Endothelial cell of umbilical vein (primary cell): ENCODE measurements at regions of chr7 and their contacts with region 1.

Region 1: DNA sequence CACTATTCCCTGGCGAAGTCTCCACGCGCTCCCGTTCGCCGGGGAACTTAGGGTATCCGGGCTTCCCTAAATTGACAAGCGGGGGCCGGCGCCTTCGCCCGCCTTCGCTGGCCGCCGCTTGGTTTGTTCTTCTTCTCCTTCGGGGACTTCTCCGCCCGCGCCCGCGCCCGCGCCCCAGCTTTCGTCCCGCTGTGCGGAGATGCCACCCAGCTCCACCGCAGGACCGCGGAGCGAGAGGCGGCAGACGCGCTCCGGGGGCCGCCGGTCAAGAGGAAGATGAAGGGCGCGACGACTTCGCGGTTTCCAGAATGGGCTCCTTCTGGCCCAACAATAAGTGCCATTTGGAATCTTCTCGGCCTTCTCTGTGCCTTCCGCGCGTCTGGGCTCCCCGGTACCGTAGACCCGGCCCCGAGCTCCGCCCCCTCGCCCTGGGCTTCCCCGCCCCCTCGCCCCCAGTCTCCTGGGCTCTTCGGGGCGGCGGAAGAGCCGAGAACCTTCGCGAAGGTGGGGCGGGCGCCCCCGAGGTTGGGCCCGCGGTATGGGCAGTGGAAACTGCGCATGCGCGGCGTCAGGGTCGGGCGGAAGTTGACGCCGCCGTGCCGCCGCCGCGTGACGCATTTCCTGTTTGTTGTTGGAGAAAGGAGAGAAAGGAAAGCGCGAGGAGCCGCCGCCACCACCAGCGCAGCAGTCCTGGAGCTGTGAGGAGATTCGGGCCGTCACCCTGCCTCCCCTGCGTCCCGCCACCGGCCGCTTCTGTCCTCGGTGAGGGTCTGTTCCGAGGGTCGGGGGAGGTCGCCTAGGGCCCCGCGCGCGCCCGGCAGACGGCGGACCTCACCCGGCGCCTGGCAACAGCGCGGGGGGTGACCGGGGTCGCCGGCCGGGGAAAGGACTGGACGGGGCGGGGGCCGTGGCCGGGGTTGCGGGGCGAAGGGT is at the start of gene DNAJB6:
- DNase-seq: peak; percentile 95
- H3K4me3 ChIP-seq: peak within 1 kb of the TSS; percentile 85 to 96 (median 92)
- H3K27ac ChIP-seq: peak within 1 kb of the TSS; percentile 81
- H3K4me1 ChIP-seq: peaks cover 19% of the 10 kb centered on the region
- H3K27me3 ChIP-seq: peaks cover 2 to 4% of the 10 kb centered on the region in 2 experiments
- CTCF ChIP-seq: no peak
- POLR2A ChIP-seq: peak; percentile 67
- total RNA-seq, gene DNAJB6: 135 and 138 TPM in 2 replicates

Region 2: DNA sequence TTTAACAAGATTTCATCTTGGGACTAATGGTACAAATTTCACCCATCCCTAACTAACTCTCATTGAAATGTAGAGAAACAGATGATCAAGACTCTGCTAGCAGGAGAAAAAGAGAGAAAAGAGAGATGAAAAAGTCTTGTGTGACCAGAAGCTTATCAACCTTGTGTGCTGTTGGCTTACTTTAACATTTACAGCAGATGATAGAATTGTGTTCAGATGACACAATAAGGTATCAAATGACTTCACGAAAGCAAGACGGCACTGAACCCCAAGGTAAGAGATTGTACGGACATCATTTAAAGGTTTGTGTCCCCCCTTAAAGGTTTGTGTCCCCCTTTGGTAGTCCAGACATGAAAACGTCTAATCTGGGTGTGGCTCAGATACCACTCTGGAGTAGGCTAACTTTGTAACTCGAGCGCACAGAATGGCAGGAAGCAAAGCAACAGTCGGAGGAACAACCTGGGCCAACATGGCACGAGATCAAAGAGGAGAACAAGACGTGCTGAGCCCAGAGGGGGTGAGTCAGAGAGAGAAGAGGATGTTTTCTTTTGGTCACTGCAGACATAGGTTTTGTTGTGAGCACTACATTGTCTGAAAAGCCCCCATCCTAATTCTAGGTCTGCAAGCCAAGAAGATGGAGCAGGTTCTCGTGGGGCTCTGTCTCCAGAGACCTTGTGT is 433.3 kb before region 1 on chr7:
- CTCF ChIA-PET with region 1: no interaction called
- POLR2A ChIA-PET with region 1: no interaction called
- dilution Hi-C with region 1: no loop called
- intact Hi-C with region 1: loop called (anchors 5 kb)
- DNase-seq: peak; percentile 81
- H3K4me3 ChIP-seq: no peak overlapping the region
- H3K27ac ChIP-seq: peak overlapping the region; percentile 80
- H3K4me1 ChIP-seq: peaks cover 14% of the 10 kb centered on the region
- H3K27me3 ChIP-seq: no peaks in the 10 kb centered on the region
- CTCF ChIP-seq: no peak
- POLR2A ChIP-seq: peak; percentile 34

Region 3: DNA sequence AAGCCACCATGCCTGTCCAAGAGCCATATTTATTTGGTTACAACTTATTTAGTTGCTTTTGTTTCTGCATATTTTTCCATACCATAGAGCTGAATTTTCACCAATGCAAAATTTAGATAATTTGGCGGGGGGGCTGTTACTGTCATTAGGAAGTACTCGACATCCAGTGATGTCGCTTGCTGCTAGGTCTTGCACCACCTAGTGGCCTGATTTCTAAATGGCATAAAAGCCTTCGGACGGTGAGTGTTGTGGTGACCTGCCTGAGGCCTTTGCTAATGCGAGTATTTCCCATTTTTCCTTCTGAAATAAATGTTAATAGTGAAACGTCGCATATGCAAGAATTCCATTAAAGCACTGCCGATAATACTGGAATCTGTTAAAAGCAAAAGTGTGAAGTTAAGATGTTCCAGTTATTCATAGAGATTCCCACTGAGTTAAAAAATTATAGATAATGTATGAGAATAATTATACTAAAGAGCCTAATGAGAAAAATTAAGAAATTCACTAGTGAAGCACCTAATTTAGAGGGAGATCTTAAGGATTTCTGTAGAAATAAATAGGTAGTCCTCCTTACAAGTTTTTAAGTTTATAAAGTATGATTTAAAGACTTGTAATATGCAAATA is 85.9 kb before region 1 on chr7:
- CTCF ChIA-PET with region 1: interaction called, 4 read pairs
- POLR2A ChIA-PET with region 1: no interaction called
- dilution Hi-C with region 1: no loop called
- intact Hi-C with region 1: loop called (anchors 5 kb)
- DNase-seq: peak; percentile 64
- H3K4me3 ChIP-seq: no peak overlapping the region
- H3K27ac ChIP-seq: no peak overlapping the region
- H3K4me1 ChIP-seq: peaks cover 13% of the 10 kb centered on the region
- H3K27me3 ChIP-seq: no peaks in the 10 kb centered on the region
- CTCF ChIP-seq: peak; percentile 67 to 76
- POLR2A ChIP-seq: no peak

Region 4: GRCh38 chr7:157273208-157274093 is 63.2 kb before region 1 on chr7:
- CTCF ChIA-PET with region 1: interaction called, 30 read pairs
- POLR2A ChIA-PET with region 1: no interaction called
- dilution Hi-C with region 1: no loop called
- intact Hi-C with region 1: loop called (anchors 1 kb)
- DNase-seq: peak; percentile 76
- H3K4me3 ChIP-seq: no peak overlapping the region
- H3K27ac ChIP-seq: no peak overlapping the region
- H3K4me1 ChIP-seq: peaks cover 14% of the 10 kb centered on the region
- H3K27me3 ChIP-seq: no peaks in the 10 kb centered on the region
- CTCF ChIP-seq: peak; percentile 95 to 99
- POLR2A ChIP-seq: no peak

Region 5: GRCh38 chr7:157278791-157279724 is 57.6 kb before region 1 on chr7:
- CTCF ChIA-PET with region 1: interaction called, 30 read pairs
- POLR2A ChIA-PET with region 1: interaction called, 9 read pairs
- dilution Hi-C with region 1: no loop called
- intact Hi-C with region 1: loop called (anchors 2 kb)
- DNase-seq: no peak
- H3K4me3 ChIP-seq: peak overlapping the region; percentile 18 to 43 (median 27)
- H3K27ac ChIP-seq: no peak overlapping the region
- H3K4me1 ChIP-seq: peaks cover 18% of the 10 kb centered on the region
- H3K27me3 ChIP-seq: no peaks in the 10 kb centered on the region
- CTCF ChIP-seq: no peak
- POLR2A ChIP-seq: no peak

Region 6: GRCh38 chr7:157309990-157310668 is 26.5 kb before region 1 on chr7:
- CTCF ChIA-PET with region 1: no interaction called
- POLR2A ChIA-PET with region 1: no interaction called
- dilution Hi-C with region 1: no loop called
- intact Hi-C with region 1: loop called (anchors 2 kb)
- DNase-seq: peak; percentile 28
- H3K4me3 ChIP-seq: no peak overlapping the region
- H3K27ac ChIP-seq: peak overlapping the region; percentile 52
- H3K4me1 ChIP-seq: peaks cover 13% of the 10 kb centered on the region
- H3K27me3 ChIP-seq: no peaks in the 10 kb centered on the region
- CTCF ChIP-seq: no peak
- POLR2A ChIP-seq: no peak

Region 7: DNA sequence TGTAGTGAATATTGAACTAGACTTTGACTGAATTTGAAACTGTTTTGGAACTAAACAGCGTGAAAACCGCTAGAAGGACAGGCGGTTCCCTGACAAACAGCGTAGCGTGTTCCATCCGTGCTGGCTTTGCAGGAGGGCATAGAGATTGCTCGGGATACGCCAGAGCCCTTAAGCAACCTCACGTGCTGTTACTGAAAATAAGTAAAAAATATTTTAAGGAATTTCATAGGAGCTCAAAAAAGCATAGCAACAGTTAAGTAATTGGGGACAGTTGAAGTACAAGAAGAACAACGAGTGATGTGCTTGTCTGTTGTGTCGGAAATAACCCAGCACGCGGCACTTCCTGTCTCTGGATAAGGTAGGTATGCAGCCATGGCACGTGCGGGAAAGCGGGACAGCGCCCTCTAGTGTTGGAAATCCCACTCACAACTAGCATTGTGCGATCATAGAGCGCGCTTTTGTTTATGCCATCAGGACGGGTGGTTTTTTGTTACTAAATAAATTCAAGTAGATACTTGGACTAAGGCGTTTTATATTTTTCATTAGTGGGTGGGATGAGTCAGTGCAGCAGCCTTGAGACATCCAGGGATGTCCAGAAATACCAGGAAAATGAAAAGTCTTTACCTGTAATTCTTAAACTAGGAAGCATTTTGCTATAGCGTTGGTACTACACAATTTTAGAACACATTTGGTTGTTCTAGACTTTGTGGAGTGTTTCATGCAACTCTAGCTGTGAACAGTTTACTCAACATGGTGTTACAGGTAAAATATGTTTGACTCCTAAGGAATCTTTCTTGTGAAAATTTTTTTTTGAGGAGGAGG is 50.5 kb after region 1 on chr7:
- CTCF ChIA-PET with region 1: interaction called, 15 read pairs
- POLR2A ChIA-PET with region 1: no interaction called
- dilution Hi-C with region 1: no loop called
- intact Hi-C with region 1: no loop called
- DNase-seq: peak; percentile 84
- H3K4me3 ChIP-seq: no peak overlapping the region
- H3K27ac ChIP-seq: no peak overlapping the region
- H3K4me1 ChIP-seq: peaks cover 6% of the 10 kb centered on the region
- H3K27me3 ChIP-seq: no peaks in the 10 kb centered on the region
- CTCF ChIP-seq: peak; percentile 85 to 91
- POLR2A ChIP-seq: no peak